ENCODE measurements at regions of chr18 and their contacts with region 1.

Region 1: GRCh38 chr18:22710628-22711380 is 222.3 kb upstream of the RBBP8 start:
- DNase-seq: peak; percentile 60
- H3K4me3 Mint-ChIP-seq: peak overlapping the region; percentile 74
- H3K27ac Mint-ChIP-seq: peak overlapping the region; percentile 70
- H3K4me1 Mint-ChIP-seq: peaks cover 43% of the 10 kb centered on the region
- H3K27me3 Mint-ChIP-seq: no peaks in the 10 kb centered on the region
- CTCF ChIP-seq: no peak

Region 2: DNA sequence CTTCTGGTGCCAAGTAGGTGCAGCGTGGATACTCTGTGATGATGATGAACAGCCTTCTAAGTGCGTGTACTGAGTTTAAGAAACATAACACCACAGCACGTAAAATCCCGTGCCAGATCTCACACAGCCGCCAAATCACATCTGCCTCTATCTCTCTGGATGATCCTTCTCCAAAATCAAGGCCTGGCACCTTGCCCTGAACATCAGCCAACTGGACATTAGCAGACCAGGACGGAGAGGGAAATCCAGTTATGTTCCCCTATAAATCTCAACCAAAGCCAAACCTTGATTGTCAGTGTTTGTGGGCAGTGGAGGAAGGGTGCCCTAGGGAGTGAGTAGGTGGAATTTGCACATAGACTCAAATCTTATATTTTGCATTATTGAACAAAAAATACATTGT is 805.9 kb before region 1 on chr18:
- CTCF ChIA-PET with region 1: no interaction called
- intact Hi-C with region 1: loop called (anchors 10 kb)
- DNase-seq: no peak
- H3K4me3 Mint-ChIP-seq: no peak overlapping the region
- H3K27ac Mint-ChIP-seq: no peak overlapping the region
- H3K4me1 Mint-ChIP-seq: no peaks in the 10 kb centered on the region
- H3K27me3 Mint-ChIP-seq: no peaks in the 10 kb centered on the region
- CTCF ChIP-seq: no peak

Region 3: DNA sequence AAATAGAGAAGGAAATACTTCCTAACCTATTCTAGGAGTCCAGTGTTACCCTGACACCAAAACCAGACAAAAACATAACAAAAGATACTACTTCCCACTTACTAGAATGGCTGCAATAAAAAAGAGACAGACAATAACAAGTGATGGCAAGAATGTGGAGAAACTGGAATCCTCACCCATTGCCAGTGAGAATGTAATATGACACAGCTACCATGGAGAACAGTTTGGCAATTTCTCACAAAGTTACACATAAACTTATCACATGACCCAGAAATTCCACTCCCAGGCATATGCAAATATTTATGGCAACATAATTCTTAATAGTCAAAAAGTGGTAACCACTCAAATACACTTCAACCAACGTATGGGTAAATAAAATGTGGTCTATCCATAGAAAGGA is 83.3 kb before region 1 on chr18:
- CTCF ChIA-PET with region 1: no interaction called
- intact Hi-C with region 1: loop called (anchors 10 kb)
- DNase-seq: no peak
- H3K4me3 Mint-ChIP-seq: no peak overlapping the region
- H3K27ac Mint-ChIP-seq: no peak overlapping the region
- H3K4me1 Mint-ChIP-seq: peaks cover 14% of the 10 kb centered on the region
- H3K27me3 Mint-ChIP-seq: no peaks in the 10 kb centered on the region
- CTCF ChIP-seq: no peak

Region 4: DNA sequence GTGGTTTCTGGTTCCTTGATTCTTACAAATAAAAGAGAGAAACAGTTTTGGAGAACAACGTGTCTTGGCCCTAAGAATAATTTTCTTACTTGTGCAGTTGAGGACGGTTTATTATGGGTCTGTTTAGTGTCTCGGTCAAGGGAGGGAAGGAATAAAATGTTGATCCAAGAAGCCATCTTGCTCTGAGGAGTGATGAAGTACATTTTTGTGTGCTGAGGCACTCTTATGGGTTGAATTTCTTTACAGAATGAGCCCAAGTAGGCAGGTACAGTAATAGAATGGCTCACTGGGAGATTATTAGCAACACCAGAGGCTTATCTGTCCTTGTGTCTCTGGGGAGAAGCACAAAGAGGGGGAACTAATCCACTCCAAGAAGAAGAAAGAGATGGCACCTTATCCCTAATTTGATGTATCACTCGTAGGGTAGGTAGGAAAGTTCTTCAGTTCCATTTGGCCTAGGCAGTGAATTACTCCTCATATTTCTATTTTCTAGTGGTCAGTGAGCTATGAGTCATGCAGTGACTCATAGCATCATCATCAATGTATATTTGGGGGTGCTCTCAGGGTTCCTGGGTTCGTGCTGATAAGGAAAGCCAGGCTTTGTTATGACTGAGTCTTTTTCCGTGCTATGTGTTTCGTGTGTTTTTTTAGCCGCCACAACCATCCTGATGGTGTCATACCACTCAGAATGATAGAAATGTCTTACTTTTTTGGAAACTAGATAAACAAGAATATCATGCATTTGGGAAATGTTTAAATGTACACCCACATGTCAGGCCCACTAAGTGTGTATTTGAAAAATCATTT is 43.0 kb before region 1 on chr18:
- CTCF ChIA-PET with region 1: no interaction called
- intact Hi-C with region 1: loop called (anchors 10 kb)
- DNase-seq: peak; percentile 58
- H3K4me3 Mint-ChIP-seq: peak overlapping the region; percentile 27
- H3K27ac Mint-ChIP-seq: peak overlapping the region; percentile 63
- H3K4me1 Mint-ChIP-seq: peaks cover 57% of the 10 kb centered on the region
- H3K27me3 Mint-ChIP-seq: no peaks in the 10 kb centered on the region
- CTCF ChIP-seq: no peak

Measured in Calu3 (cell line).